Activated naive CD4-positive, alpha-beta T cell treated with anti-CD3 and anti-CD28 coated beads for 36 hours (primary cell): ENCODE measurements at regions of chr14 and their contacts with region 1.

Region 1: DNA sequence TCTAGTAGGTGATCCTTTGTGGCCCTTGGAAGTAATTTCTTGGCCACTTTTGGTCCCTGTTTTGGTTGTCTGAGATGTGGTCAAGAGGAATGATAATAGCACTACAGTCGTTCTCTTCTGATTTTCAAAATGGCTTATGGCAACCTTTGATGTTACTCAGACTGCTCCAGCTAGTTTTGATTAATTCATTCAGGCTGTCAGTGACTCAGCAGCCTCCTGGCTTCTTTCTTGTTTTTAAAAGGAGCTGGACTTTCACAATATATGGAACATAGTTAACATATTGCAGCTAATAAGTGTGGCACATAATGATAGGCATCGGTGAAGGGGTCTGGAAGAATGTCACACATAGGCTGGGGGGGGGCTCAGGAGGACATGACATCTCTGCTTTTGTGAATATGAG is 47.4 kb downstream of the WDR20 start:
- DNase-seq: no peak
- H3K4me3 Mint-ChIP-seq: no peak overlapping the region
- H3K27ac Mint-ChIP-seq: no peak overlapping the region
- H3K4me1 Mint-ChIP-seq: peaks cover 66% of the 10 kb centered on the region
- H3K27me3 Mint-ChIP-seq: no peaks in the 10 kb centered on the region

Region 2: DNA sequence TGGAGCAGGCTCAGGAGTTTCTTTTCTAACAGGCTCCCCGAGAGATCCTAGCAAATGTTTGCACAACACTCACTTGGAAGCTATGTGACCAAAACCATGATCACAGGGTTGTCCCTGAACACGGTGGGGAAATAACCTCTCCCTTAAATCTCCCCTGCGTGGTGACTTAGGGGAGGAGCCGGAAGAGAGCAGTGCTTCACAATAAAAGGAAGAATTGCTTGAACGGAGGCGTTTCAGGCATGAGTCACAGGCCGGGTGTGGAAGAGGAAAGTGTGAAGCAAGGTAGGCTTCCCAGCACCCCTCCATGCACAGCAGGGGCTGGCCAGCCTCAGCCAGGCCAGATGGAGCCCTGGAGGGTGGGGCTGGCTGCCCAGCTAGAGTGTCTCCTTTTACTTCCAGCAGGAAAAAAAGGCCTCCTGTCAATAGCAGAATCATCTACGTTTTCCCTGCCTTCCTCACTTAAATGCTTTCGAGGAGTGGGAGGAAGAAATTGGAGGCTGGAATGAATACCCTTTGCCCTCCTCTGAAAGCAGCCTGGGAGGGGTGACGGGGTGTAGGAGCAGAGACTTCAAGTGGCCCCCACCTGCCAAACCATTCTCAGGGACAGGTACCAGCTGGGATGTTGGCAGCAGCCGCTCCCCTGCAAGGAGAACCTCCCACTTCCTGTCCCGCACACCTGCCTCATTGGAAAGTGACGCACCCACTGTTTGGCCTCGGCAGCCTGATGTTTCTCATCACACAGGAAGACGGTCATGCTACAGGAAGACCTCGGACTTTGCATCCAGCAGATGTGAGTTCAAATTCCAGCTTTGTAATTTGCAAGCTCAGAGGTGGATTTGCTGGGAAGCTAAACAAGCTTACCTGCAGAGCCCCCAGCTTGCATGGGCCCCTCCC is 455.6 kb before region 1 on chr14:
- CTCF ChIA-PET with region 1: no interaction called
- intact Hi-C with region 1: loop called (anchors 5 kb)
- DNase-seq: peak; percentile 96
- H3K4me3 Mint-ChIP-seq: peak overlapping the region; percentile 71
- H3K27ac Mint-ChIP-seq: peak overlapping the region; percentile 98
- H3K4me1 Mint-ChIP-seq: peaks cover 53% of the 10 kb centered on the region
- H3K27me3 Mint-ChIP-seq: no peaks in the 10 kb centered on the region

Region 3: GRCh38 chr14:101927859-101928258 is 259.2 kb before region 1 on chr14:
- CTCF ChIA-PET with region 1: no interaction called
- intact Hi-C with region 1: no loop called
- DNase-seq: no peak
- H3K4me3 Mint-ChIP-seq: no peak overlapping the region
- H3K27ac Mint-ChIP-seq: no peak overlapping the region
- H3K4me1 Mint-ChIP-seq: no peaks in the 10 kb centered on the region
- H3K27me3 Mint-ChIP-seq: no peaks in the 10 kb centered on the region

Region 4: DNA sequence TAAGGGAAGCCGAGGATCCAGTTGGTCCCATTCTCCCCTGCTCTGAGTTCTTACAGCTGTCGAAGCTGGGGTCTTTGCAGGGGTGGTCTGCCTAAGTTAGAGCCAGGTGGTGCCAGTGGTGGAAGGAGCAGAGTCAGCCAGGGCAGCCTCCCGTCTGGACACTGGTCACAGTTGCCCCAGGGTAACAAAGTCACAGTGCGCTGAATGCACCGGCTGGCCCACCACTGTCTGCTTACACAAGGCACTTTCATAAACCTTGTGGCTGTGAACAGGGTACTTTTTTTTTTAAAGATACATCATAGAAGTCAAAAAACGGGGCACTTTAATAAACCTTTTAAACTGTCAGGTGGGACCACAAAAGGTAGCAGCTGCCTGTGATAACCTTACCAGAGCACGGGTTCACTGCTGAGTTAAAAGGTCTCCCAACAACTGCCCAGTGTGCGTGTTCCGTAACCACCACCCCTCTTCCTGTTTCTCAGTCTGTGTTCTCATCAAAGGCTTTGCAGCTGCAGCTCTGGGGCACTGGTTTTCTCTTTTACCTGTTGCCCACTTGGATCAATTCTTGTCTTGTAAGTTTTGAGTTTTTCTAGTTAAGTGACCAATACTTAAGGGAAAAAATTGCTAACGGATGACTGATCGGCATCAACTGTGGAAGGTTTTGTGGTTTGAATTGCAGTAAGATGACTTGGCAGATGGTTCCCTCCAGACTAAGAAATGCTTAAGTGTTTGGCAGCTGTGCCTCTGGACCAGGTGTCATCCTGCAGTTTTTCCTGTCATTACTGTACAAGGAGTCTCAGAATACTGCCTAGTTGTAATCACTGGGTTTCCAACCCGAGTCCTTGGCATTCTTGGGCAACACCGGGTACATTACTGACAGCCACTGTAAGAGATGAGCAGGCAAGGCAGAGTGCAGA is 166.7 kb before region 1 on chr14:
- CTCF ChIA-PET with region 1: no interaction called
- intact Hi-C with region 1: loop called (anchors 2 kb)
- DNase-seq: peak; percentile 82
- H3K4me3 Mint-ChIP-seq: no peak overlapping the region
- H3K27ac Mint-ChIP-seq: peak overlapping the region; percentile 87
- H3K4me1 Mint-ChIP-seq: peaks cover 22% of the 10 kb centered on the region
- H3K27me3 Mint-ChIP-seq: no peaks in the 10 kb centered on the region

Region 5: DNA sequence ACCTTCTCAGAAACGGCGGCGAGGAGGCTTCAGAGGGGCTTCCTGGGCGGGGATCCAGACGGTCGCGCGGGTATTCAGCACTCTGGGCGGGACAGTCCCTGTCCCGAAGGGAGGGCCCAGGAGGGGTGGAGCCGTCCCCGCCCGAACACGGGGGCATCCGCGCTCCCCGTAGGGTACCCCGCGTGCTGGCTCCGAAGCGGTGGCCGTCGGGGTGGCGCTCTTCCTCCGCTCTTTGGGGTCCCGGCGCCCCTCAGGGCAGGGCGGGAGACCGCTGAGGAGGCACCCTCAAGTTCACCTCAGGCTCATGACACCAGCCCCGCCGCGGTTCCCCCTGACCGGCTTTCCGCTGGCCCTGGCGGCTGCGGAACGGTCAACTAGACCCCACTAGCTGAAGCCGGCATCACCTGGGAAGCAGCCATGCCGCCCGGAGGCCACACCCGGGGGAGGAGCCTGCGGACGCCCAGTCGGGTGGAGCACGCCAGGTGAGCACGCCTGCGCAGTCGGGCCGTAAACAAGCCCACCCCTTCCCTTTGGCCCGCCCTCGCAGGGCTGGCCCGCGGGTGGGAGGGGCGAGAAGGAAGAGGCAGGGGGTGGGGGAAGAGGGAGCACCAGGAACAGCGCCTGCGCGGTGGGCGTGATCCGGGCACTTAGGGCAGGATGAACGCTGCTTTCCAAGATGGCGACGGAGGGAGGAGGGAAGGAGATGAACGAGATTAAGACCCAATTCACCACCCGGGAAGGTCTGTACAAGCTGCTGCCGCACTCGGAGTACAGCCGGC is 47.6 kb before region 1 on chr14 and contains the start of gene WDR20:
- CTCF ChIA-PET with region 1: interaction called, 6 read pairs
- intact Hi-C with region 1: loop called (anchors 1 kb)
- DNase-seq: peak; percentile 99
- H3K4me3 Mint-ChIP-seq: peak within 1 kb of the TSS; percentile 95
- H3K27ac Mint-ChIP-seq: peak within 1 kb of the TSS; percentile 94
- H3K4me1 Mint-ChIP-seq: peaks cover 24% of the 10 kb centered on the region
- H3K27me3 Mint-ChIP-seq: no peaks in the 10 kb centered on the region
- total RNA-seq, gene WDR20: 20.5 to 21.4 TPM

Region 6: DNA sequence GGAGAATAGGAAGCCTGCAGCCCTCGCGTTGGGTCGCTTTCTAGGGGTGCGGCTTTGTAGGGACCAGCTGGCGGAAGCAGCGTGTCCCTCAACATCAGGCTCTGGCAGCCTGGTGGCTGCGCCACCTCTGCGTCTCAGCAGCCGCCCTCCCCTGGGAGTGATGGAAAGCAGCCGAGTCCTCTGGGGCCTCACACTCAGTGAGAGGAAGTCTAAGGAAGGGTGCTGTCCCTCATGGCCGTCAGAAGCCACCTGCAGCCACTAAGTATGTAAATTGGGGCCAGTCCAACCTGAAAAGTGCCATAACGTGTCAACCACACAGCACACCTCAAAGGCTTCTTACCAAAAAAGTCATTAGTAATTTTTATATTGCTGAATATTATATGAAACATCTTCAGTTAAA is 33.0 kb after region 1 on chr14:
- CTCF ChIA-PET with region 1: no interaction called
- intact Hi-C with region 1: loop called (anchors 1 kb)
- DNase-seq: peak; percentile 69
- H3K4me3 Mint-ChIP-seq: no peak overlapping the region
- H3K27ac Mint-ChIP-seq: no peak overlapping the region
- H3K4me1 Mint-ChIP-seq: peaks cover 13% of the 10 kb centered on the region
- H3K27me3 Mint-ChIP-seq: no peaks in the 10 kb centered on the region

Region 7: GRCh38 chr14:102819176-102819628 is 632.1 kb after region 1 on chr14:
- CTCF ChIA-PET with region 1: no interaction called
- intact Hi-C with region 1: loop called (anchors 10 kb)
- DNase-seq: peak; percentile 93
- H3K4me3 Mint-ChIP-seq: peak overlapping the region; percentile 44
- H3K27ac Mint-ChIP-seq: peak overlapping the region; percentile 93
- H3K4me1 Mint-ChIP-seq: peaks cover 88% of the 10 kb centered on the region
- H3K27me3 Mint-ChIP-seq: no peaks in the 10 kb centered on the region